Motor neuron (in vitro differentiated cells): ENCODE measurements at regions of chr20 and their contacts with region 1.

Region 1: GRCh38 chr20:5126512-5127203 is at the start of gene CDS2:
- ATAC-seq: peak; percentile 82 to 93 (median 90)
- H3K4me3 ChIP-seq: peak within 1 kb of the TSS; percentile 58 to 65 (median 61)
- H3K27ac ChIP-seq: peak within 1 kb of the TSS; percentile 78 to 85
- H3K4me1 ChIP-seq: peaks cover 14 to 15% of the 10 kb centered on the region in 2 donors
- total RNA-seq, gene CDS2: 18.6 to 55.0 (median 32.8) TPM

Region 2: DNA sequence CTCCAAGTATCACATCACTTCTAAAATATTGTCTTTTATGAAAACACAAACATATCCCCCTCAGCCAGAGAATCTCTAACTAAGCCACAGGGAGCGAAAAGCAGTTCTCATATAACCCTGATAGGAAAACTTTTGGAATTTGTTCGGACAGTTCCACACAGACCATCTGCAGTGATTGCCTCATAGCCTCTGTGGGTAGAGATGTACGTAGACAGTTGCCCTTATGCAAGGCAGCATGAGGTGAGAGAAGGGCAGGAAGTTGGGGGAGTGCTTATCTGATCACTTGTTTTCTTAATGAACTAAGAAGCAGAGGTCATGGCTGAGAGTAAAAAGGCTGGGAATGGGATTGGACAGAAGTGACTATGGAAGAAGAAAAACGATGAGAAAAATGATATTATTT is 164.9 kb before region 1 on chr20:
- in situ Hi-C with region 1: no loop called
- ATAC-seq: no peak
- H3K4me3 ChIP-seq: no peak overlapping the region
- H3K27ac ChIP-seq: no peak overlapping the region
- H3K4me1 ChIP-seq: no peaks in the 10 kb centered on the region

Region 3: DNA sequence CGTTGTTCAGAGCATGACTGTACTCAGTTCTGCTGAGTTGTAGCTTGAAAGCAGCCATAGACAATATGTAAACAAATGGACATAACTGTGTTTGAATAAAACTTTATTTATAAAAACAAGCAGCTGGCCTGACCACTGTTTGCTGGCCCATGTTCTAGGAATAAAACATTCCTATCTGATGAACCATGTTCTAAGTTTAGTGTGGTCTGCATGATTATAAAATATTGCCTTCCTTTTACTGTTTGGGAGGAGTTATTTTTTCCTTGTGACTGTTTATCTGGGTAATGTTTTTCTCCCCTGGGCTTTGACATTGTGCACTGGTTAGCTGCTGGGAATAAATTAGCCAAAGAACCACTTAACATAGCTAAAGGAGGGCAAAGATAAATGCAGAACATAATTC is 55.3 kb after region 1 on chr20:
- in situ Hi-C with region 1: loop called in 1 of 9 experiments (anchors 10 kb)
- ATAC-seq: peak in 4 of 8 experiments; percentile 14 to 89 (median 80)
- H3K4me3 ChIP-seq: no peak overlapping the region
- H3K27ac ChIP-seq: no peak overlapping the region
- H3K4me1 ChIP-seq: no peaks in the 10 kb centered on the region

Region 4: DNA sequence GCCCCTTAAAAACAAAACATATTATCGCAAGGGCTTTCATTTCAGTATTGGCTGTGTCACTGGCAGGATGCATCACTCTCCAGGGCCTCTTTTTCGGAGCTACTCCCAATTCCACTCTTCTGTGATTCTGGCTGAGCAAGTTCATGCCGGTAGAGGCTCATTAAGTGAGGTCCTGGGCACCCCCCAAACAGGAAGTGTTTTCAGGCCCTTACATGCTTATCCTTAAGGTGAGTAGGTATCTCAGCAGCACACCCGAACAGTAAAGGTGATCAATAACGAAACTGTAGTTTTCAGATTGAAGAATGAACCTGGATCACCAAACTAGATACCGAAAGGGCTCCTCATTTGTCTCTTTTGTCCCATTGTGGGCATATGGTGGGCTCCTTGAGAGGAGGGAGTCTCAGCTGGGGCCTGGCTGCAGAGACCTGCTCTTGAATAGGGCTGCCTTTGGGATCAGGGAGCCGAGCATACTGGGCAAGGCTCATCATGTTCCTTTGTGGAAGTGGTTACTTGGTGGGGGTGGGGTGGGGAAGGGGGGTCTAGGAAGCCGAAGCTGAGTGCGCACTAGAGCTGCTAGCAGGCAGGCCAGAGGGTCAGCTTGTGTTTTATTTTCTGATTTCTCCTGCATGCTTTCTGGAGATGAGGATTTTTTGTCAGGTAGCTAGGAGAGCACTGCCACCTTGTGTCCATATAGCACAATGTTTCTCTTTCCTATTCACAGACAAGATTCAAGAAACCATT is 65.3 kb after region 1 on chr20:
- in situ Hi-C with region 1: loop called in 2 of 9 experiments (anchors 10 kb)
- ATAC-seq: peak; percentile 72 to 89 (median 86)
- H3K4me3 ChIP-seq: peak overlapping the region in 1 of 5 donors; percentile 16
- H3K27ac ChIP-seq: peak overlapping the region in 1 of 2 donors; percentile 9
- H3K4me1 ChIP-seq: peaks cover 5 to 11% of the 10 kb centered on the region in 2 donors